GM12878 (cell line): ENCODE measurements at regions of chr4 and their contacts with region 1.

Region 1: DNA sequence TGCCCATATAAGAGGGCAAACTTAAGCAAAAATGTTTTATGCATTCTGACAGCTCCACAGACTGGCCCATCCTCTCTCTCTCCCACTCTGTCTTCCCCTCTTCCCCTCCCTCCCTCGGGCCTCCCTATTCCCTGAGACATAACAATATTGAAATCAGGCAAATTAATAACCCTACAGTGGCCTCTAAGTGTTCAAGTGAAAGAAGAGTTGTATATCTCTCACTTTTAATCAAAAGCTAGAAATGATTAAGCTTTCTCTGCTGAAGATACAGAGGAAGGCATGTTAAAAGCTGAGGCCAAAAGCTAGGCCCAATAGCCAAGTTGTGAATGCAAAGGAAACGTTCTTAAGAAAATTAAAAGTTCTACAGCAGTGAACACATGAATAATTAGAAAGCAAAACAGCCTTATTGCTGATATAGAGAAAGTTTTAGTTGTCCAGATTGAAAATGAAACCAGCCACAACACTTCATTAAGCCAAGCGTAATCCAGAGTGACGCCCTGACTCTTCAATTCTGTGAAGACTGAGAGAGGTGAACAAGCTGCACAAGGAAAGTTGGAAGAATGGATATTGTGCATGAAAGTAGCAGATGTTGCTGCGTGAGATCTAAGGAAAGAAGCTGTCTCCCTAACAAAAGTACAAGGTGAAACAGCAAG is 54.9 kb downstream of the USO1 start:
- DNase-seq: no peak
- ATAC-seq: peak; percentile 74
- H3K4me3 ChIP-seq: no peak overlapping the region
- H3K27ac ChIP-seq: no peak overlapping the region
- H3K4me1 ChIP-seq: no peaks in the 10 kb centered on the region; the same call in 1 of the 2 replicates
- H3K27me3 ChIP-seq: no peaks in the 10 kb centered on the region
- CTCF ChIP-seq: no peak
- EP300 ChIP-seq: no peak
- POLR2A ChIP-seq: no peak
- RAD21 ChIP-seq: no peak

Region 2: DNA sequence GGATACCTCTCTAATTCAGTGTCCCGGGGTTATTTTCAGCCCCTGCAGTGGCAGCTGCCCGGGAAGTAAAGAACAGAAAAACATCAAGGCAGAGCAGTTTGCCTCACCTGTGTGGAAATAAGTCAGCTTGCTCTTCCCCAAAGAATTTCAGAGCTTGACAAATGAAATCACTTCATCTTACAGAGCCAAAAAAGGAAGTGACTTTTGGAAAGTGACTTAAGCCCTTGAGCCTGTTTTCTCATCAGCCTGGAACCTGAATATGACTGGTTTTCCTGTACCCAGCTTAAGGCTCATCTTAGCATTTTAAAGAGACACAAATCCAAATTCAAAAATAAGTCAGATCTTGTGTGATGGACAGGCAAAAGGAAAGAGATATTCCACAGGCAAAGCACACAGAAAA is 476.6 kb before region 1 on chr4:
- CTCF ChIA-PET with region 1: no interaction called
- POLR2A ChIA-PET with region 1: no interaction called
- RAD21 ChIA-PET with region 1: no interaction called
- SMC1A ChIA-PET with region 1: no interaction called
- in situ Hi-C with region 1: no loop called
- intact Hi-C with region 1: no loop called
- DNase-seq: no peak
- ATAC-seq: no peak
- H3K4me3 ChIP-seq: no peak overlapping the region
- H3K27ac ChIP-seq: no peak overlapping the region
- H3K4me1 ChIP-seq: no peaks in the 10 kb centered on the region
- H3K27me3 ChIP-seq: no peaks in the 10 kb centered on the region
- CTCF ChIP-seq: no peak
- EP300 ChIP-seq: no peak
- POLR2A ChIP-seq: no peak
- RAD21 ChIP-seq: no peak

Region 3: GRCh38 chr4:75769036-75769435 is 10.2 kb before region 1 on chr4:
- CTCF ChIA-PET with region 1: interaction called, 3 read pairs
- POLR2A ChIA-PET with region 1: interaction called, 4 read pairs
- RAD21 ChIA-PET with region 1: no interaction called
- SMC1A ChIA-PET with region 1: interaction called, 10 read pairs
- in situ Hi-C with region 1: no loop called
- intact Hi-C with region 1: no loop called
- DNase-seq: no peak
- ATAC-seq: no peak
- H3K4me3 ChIP-seq: no peak overlapping the region
- H3K27ac ChIP-seq: no peak overlapping the region
- H3K4me1 ChIP-seq: no peaks in the 10 kb centered on the region
- H3K27me3 ChIP-seq: no peaks in the 10 kb centered on the region
- CTCF ChIP-seq: no peak
- EP300 ChIP-seq: no peak
- POLR2A ChIP-seq: no peak
- RAD21 ChIP-seq: no peak

Region 4: DNA sequence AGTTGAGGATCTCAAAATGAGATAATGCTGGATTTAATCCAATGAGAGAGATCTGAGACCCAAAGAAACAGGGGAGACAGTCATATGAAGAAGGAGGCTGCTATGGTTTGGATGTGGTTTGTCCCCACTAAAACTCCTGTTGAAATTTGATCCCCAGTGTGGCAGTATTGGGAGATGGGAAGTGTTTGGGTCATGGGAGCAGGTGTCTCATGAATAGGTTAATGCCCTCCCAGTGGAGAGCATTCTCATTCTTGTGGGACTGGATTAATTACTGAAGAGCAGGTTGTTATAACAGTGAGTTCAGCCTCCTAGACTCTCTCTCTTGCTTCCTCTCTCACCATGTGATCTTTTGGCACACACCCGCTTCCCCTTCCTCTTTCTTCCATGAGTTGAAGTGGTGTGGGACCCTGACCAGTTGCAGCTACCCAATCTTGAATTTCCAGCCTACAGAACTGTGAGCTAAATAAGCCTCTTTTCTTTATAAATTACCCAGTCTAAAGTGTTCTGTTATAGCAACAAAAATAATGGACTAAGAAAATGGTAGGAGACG is 52.7 kb after region 1 on chr4:
- CTCF ChIA-PET with region 1: no interaction called
- POLR2A ChIA-PET with region 1: no interaction called
- RAD21 ChIA-PET with region 1: no interaction called
- SMC1A ChIA-PET with region 1: no interaction called
- in situ Hi-C with region 1: no loop called
- intact Hi-C with region 1: no loop called
- DNase-seq: no peak
- ATAC-seq: no peak
- H3K4me3 ChIP-seq: no peak overlapping the region
- H3K27ac ChIP-seq: no peak overlapping the region
- H3K4me1 ChIP-seq: no peaks in the 10 kb centered on the region
- H3K27me3 ChIP-seq: no peaks in the 10 kb centered on the region
- CTCF ChIP-seq: no peak
- EP300 ChIP-seq: no peak
- POLR2A ChIP-seq: no peak
- RAD21 ChIP-seq: no peak